Thyroid gland (tissue), 4 donors: ENCODE measurements at regions of chr22 and their contacts with region 1.

Region 1: GRCh38 chr22:46542011-46542985 is 4.9 kb upstream of the CELSR1 start:
- DNase-seq: peak; percentile 80 to 81
- H3K4me3 ChIP-seq: no peak overlapping the region
- H3K27ac ChIP-seq: peak overlapping the region in 2 of 3 donors; percentile 34 to 84
- H3K4me1 ChIP-seq: peaks cover 21 to 36% of the 10 kb centered on the region in 2 donors
- H3K27me3 ChIP-seq: no peaks in the 10 kb centered on the region
- CTCF ChIP-seq: peak; percentile 91 to 99 (median 96)
- POLR2A ChIP-seq: no peak

Region 2: GRCh38 chr22:46122511-46122971 is 419.8 kb before region 1 on chr22:
- intact Hi-C with region 1: loop called (anchors 10 kb)
- DNase-seq: peak; percentile 65 to 71
- H3K4me3 ChIP-seq: no peak overlapping the region
- H3K27ac ChIP-seq: no peak overlapping the region
- H3K4me1 ChIP-seq: peaks cover 0 to 4% of the 10 kb centered on the region in 2 donors
- H3K27me3 ChIP-seq: no peaks in the 10 kb centered on the region
- CTCF ChIP-seq: peak; percentile 81 to 95 (median 88)
- POLR2A ChIP-seq: no peak

Region 3: DNA sequence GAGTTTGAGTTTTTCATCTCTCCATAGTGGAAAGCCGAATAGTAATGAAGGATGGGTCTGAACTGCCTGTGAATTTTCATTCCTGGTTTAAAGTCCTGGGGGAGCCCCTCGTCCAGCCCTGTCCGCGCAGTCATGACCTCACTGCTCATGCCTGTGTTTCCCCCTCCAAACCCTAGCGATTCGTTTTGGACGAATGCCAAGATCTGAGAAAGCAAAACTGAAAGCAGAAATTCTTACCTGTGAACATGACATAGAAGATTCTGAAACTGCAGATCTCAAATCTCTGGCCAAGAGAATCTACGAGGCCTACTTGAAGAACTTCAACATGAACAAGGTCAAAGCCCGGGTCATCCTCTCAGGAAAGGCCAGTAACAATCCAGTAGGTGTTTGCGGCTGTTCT is 322.7 kb before region 1 on chr22:
- intact Hi-C with region 1: no loop called
- DNase-seq: no peak
- H3K4me3 ChIP-seq: no peak overlapping the region
- H3K27ac ChIP-seq: no peak overlapping the region
- H3K4me1 ChIP-seq: no peaks in the 10 kb centered on the region
- H3K27me3 ChIP-seq: no peaks in the 10 kb centered on the region
- CTCF ChIP-seq: no peak
- POLR2A ChIP-seq: no peak

Region 4: GRCh38 chr22:46367707-46368191 is 174.5 kb before region 1 on chr22:
- intact Hi-C with region 1: loop called (anchors 5 kb)
- DNase-seq: peak; percentile 59 to 63
- H3K4me3 ChIP-seq: no peak overlapping the region
- H3K27ac ChIP-seq: no peak overlapping the region
- H3K4me1 ChIP-seq: peaks cover 8 to 11% of the 10 kb centered on the region in 2 donors
- H3K27me3 ChIP-seq: no peaks in the 10 kb centered on the region
- CTCF ChIP-seq: peak; percentile 65 to 81 (median 68)
- POLR2A ChIP-seq: no peak